Gastrocnemius medialis (tissue), 4 donors: ENCODE measurements at regions of chr1 and their contacts with region 1.

Region 1: GRCh38 chr1:8560611-8561544 is 243.0 kb downstream of the SLC45A1 start:
- DNase-seq: no peak
- ATAC-seq: peak; percentile 76 to 84
- H3K4me3 ChIP-seq: no peak overlapping the region
- H3K27ac ChIP-seq: peak overlapping the region in 1 of 4 donors; percentile 8
- H3K4me1 ChIP-seq: peaks cover 4 to 20% of the 10 kb centered on the region in 2 donors
- H3K27me3 ChIP-seq: no peaks in the 10 kb centered on the region
- CTCF ChIP-seq: peak; percentile 89 to 98 (median 91)
- POLR2A ChIP-seq: no peak

Region 2: DNA sequence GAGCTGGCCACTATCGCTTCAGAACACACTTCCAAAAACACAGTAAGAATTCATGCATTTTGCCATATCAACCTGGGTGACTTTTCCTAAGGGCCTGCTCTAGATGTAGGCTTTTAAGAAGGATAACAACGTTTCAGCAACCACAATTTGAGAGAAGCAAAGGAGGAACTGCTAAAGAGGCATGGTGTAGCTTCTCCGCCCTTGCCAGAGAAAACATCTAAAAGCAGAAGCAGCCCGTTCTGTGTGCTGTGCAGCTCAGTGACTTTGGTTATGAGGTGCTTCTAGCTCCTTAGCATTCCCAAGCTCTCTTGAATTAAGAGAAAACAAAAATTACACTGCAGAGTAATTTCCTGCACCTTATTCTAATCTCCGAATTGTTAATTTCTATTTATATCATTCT is 774.1 kb before region 1 on chr1:
- in situ Hi-C with region 1: no loop called
- intact Hi-C with region 1: no loop called
- DNase-seq: no peak
- ATAC-seq: no peak
- H3K4me3 ChIP-seq: no peak overlapping the region
- H3K27ac ChIP-seq: peak overlapping the region in 1 of 4 donors; percentile 7
- H3K4me1 ChIP-seq: peaks cover 15 to 26% of the 10 kb centered on the region in 2 donors
- H3K27me3 ChIP-seq: no peaks in the 10 kb centered on the region
- CTCF ChIP-seq: no peak
- POLR2A ChIP-seq: no peak

Region 3: GRCh38 chr1:8409106-8409505 is 151.8 kb before region 1 on chr1:
- in situ Hi-C with region 1: no loop called
- intact Hi-C with region 1: no loop called
- DNase-seq: no peak
- ATAC-seq: peak; percentile 41 to 61
- H3K4me3 ChIP-seq: peak overlapping the region; percentile 9 to 29 (median 22)
- H3K27ac ChIP-seq: peak overlapping the region; percentile 91 to 100 (median 96)
- H3K4me1 ChIP-seq: peaks cover 83 to 90% of the 10 kb centered on the region in 2 donors
- H3K27me3 ChIP-seq: no peaks in the 10 kb centered on the region
- CTCF ChIP-seq: peak in 4 of 5 experiments; percentile 54 to 63 (median 58)
- POLR2A ChIP-seq: no peak

Region 4: GRCh38 chr1:8671306-8671917 is 110.5 kb after region 1 on chr1:
- in situ Hi-C with region 1: loop called in 3 of 4 experiments (anchors 5 to 25 kb)
- intact Hi-C with region 1: loop called (anchors 1 kb)
- DNase-seq: peak; percentile 20 to 34
- ATAC-seq: peak; percentile 61 to 63
- H3K4me3 ChIP-seq: peak overlapping the region in 2 of 4 donors; percentile 3 to 23
- H3K27ac ChIP-seq: peak overlapping the region in 1 of 4 donors; percentile 62
- H3K4me1 ChIP-seq: peaks cover 34 to 55% of the 10 kb centered on the region in 2 donors
- H3K27me3 ChIP-seq: no peaks in the 10 kb centered on the region
- CTCF ChIP-seq: peak; percentile 75 to 87 (median 80)
- POLR2A ChIP-seq: no peak

Region 5: GRCh38 chr1:8702850-8703810 is 142.3 kb after region 1 on chr1:
- in situ Hi-C with region 1: loop called in 1 of 4 experiments (anchors 10 kb)
- intact Hi-C with region 1: no loop called
- DNase-seq: peak; percentile 85 to 92
- ATAC-seq: peak; percentile 85
- H3K4me3 ChIP-seq: peak overlapping the region; percentile 62 to 70 (median 66)
- H3K27ac ChIP-seq: peak overlapping the region; percentile 85 to 92 (median 88)
- H3K4me1 ChIP-seq: peaks cover 47 to 58% of the 10 kb centered on the region in 2 donors
- H3K27me3 ChIP-seq: no peaks in the 10 kb centered on the region
- CTCF ChIP-seq: peak in 3 of 5 experiments; percentile 27 to 59 (median 32)
- POLR2A ChIP-seq: peak; percentile 87

Region 6: DNA sequence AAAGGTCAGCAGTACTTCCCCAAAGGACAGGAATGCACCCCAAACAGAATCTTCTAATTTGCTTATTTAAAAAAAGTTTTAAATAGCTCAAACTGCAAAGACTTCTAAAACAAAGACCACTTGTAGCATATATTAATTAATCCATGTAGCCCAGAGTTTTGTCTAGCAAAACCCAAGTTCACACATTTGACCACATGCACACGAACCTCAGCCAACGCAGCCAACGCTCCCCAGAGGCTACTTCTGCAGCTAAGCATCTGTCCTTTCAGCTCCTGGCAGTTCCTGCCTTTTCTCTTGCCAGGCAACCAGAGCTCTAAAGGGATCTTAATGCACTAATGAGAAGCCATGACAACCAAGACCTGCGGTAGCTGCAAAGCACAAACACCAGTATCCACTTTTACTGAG is 166.9 kb after region 1 on chr1:
- in situ Hi-C with region 1: loop called in 3 of 4 experiments (anchors 5 to 10 kb)
- intact Hi-C with region 1: loop called (anchors 1 kb)
- DNase-seq: peak; percentile 24 to 47
- ATAC-seq: peak; percentile 44 to 73
- H3K4me3 ChIP-seq: no peak overlapping the region
- H3K27ac ChIP-seq: peak overlapping the region in 2 of 4 donors; percentile 2 to 57
- H3K4me1 ChIP-seq: peaks cover 30 to 33% of the 10 kb centered on the region in 2 donors
- H3K27me3 ChIP-seq: no peaks in the 10 kb centered on the region
- CTCF ChIP-seq: no peak
- POLR2A ChIP-seq: no peak

Region 7: GRCh38 chr1:8858888-8859706 is 298.2 kb after region 1 on chr1:
- in situ Hi-C with region 1: loop called in 3 of 4 experiments (anchors 5 to 10 kb)
- intact Hi-C with region 1: no loop called
- DNase-seq: no peak
- ATAC-seq: peak in 1 of 2 donors; percentile 43
- H3K4me3 ChIP-seq: no peak overlapping the region
- H3K27ac ChIP-seq: peak overlapping the region in 3 of 4 donors; percentile 29 to 61 (median 58)
- H3K4me1 ChIP-seq: peaks cover 0 to 24% of the 10 kb centered on the region in 2 donors
- H3K27me3 ChIP-seq: no peaks in the 10 kb centered on the region
- CTCF ChIP-seq: peak; percentile 29 to 60 (median 56)
- POLR2A ChIP-seq: no peak

Region 8: GRCh38 chr1:8910914-8911313 is 350.0 kb after region 1 on chr1:
- in situ Hi-C with region 1: no loop called
- intact Hi-C with region 1: no loop called
- DNase-seq: no peak
- ATAC-seq: no peak
- H3K4me3 ChIP-seq: no peak overlapping the region
- H3K27ac ChIP-seq: no peak overlapping the region
- H3K4me1 ChIP-seq: no peaks in the 10 kb centered on the region
- H3K27me3 ChIP-seq: no peaks in the 10 kb centered on the region
- CTCF ChIP-seq: no peak
- POLR2A ChIP-seq: no peak

Region 9: GRCh38 chr1:9166289-9167235 is 605.7 kb after region 1 on chr1:
- in situ Hi-C with region 1: no loop called
- intact Hi-C with region 1: no loop called
- DNase-seq: no peak
- ATAC-seq: no peak
- H3K4me3 ChIP-seq: no peak overlapping the region
- H3K27ac ChIP-seq: no peak overlapping the region
- H3K4me1 ChIP-seq: peaks cover 9 to 14% of the 10 kb centered on the region in 2 donors
- H3K27me3 ChIP-seq: no peaks in the 10 kb centered on the region
- CTCF ChIP-seq: no peak
- POLR2A ChIP-seq: no peak